ENCODE measurements at regions of chr17 and their contacts with region 1.

Region 1: DNA sequence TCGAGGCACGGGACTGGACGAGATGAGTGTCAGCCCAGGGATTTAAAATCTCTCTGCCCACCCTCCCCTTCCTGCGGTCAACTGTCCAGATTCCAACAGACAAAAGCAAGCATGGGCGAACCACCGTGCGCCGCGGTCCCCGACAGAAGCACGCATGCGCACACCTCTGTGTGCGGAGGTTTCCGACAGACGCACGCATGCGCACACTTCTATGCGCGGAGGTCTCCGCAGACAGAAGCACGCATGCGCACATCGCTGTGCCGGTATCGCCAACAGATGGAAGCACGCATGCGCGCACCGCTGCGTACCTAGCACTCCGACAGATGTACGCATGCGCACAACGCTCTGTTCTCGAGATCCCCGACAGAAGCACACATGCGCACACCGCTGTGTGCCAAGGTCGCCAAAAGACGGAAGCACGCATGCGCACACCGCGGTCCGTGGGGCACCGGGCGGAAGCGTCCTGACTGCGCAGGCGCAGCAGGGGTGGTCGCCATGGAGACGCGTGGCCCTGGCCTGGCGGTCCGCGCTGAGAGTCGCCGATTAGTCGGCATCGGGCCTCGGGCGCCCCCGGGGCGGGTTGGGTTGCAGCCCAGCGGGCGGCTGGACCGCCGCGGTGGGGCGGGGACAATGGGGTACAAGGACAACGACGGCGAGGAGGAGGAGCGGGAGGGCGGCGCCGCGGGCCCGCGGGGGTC is 57.4 kb upstream of the RPH3AL start:
- DNase-seq: peak; percentile 98
- H3K4me3 ChIP-seq: peak overlapping the region; percentile 74 to 94
- H3K27ac ChIP-seq: peak overlapping the region; percentile 55 to 68
- H3K4me1 ChIP-seq: peaks cover 0 to 11% of the 10 kb centered on the region in 2 experiments; a peak in 1 of 4 replicates
- H3K27me3 ChIP-seq: no peaks in the 10 kb centered on the region
- CTCF ChIP-seq: no peak
- EP300 ChIP-seq: no peak
- RAD21 ChIP-seq: no peak

Region 2: GRCh38 chr17:320809-321653 is 89.0 kb before region 1 on chr17:
- CTCF ChIA-PET with region 1: no interaction called
- POLR2A ChIA-PET with region 1: no interaction called
- DNase-seq: no peak
- H3K4me3 ChIP-seq: no peak overlapping the region
- H3K27ac ChIP-seq: no peak overlapping the region
- H3K4me1 ChIP-seq: no peaks in the 10 kb centered on the region; a peak in 1 of 4 replicates
- H3K27me3 ChIP-seq: no peaks in the 10 kb centered on the region
- CTCF ChIP-seq: no peak
- EP300 ChIP-seq: no peak
- RAD21 ChIP-seq: no peak

Region 3: DNA sequence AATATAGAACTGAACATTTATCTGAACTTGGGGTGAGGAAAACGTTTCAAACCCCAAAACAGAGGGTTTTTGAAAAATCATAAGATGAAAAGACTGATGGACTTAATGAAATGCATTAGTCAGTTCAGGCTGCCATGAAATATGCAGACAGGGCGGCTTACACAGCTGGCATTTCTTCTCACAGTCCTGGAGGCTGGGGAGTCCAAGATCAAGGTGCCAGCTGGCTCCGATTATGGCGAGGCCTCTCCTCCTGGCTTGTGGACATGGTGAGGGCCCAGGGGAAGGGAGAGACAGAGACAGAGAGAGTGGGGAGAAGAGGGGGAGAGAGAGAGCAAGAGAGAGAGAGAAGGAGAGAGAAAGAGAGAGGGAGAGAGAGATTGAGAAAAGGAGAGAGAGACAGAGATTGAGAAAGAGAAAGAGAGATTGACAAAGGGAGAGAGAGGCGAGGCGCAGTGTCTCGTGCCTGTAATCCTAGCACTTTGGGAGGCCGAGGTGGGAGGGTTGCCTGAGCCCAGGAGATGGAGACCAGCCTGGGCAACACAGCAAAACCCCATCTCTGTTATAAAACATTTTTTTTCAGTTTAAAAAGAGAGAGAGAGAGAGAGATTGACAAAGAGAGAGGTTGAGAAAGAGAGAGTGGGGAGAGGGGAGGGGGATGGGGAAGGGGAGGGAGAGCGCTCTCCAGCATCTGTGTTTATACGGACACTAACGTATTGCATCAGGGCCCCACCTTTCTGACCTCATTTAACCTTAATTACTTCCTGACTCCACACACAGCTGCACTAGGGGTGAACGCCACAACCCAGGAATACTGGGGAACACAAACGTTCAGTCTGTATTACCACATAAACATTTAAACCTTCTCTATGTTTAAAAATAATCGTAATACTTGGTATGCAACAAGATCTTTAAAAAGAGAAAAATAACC is 32.8 kb before region 1 on chr17:
- CTCF ChIA-PET with region 1: no interaction called
- POLR2A ChIA-PET with region 1: no interaction called
- DNase-seq: no peak
- H3K4me3 ChIP-seq: no peak overlapping the region
- H3K27ac ChIP-seq: no peak overlapping the region
- H3K4me1 ChIP-seq: peaks cover 0 to 3% of the 10 kb centered on the region in 2 experiments; a peak in 1 of 4 replicates
- H3K27me3 ChIP-seq: no peaks in the 10 kb centered on the region
- CTCF ChIP-seq: no peak
- EP300 ChIP-seq: no peak
- RAD21 ChIP-seq: no peak

Region 4: DNA sequence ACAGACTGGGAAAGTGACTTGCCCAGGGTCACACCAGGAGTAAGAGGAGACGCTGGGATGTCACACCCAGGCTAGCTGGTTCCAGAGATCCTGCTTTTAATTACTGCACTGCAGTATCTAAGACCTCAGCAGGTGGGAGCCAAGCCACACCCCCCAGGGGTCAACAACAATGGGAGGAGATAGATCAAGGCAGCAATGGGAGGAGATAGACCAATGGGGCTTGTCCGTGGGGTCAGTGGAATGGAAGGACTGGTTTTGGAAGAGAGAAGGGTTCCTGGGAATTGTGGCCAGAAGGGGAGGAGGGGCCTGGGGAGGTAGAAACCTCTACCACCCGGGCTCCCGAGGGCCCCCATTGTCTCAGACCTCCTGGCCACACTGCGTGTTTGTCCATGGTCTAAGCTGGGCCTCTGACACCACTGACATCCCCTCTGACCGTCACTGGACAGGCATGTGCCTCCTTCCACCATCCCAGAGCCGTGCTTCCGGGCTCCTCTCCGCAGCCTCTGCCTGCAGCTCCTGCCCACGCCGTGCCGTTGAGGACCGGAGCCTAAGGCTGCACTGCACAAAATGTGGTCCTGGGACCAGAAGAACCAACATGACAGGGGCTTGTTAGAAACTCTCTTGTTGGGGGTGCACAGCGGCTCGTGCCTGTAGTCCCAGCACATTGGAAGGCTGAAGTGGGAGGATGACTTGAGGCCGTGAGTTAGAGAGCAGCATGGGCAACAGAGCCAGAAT is 12.4 kb after region 1 on chr17:
- CTCF ChIA-PET with region 1: interaction called, 25 read pairs
- POLR2A ChIA-PET with region 1: no interaction called
- DNase-seq: no peak
- H3K4me3 ChIP-seq: no peak overlapping the region
- H3K27ac ChIP-seq: no peak overlapping the region
- H3K4me1 ChIP-seq: no peaks in the 10 kb centered on the region
- H3K27me3 ChIP-seq: no peaks in the 10 kb centered on the region
- CTCF ChIP-seq: no peak
- EP300 ChIP-seq: no peak
- RAD21 ChIP-seq: no peak

Region 5: GRCh38 chr17:491086-492021 is 81.4 kb after region 1 on chr17:
- CTCF ChIA-PET with region 1: interaction called, 14 read pairs
- POLR2A ChIA-PET with region 1: no interaction called
- DNase-seq: peak; percentile 94
- H3K4me3 ChIP-seq: peak overlapping the region; percentile 49 to 63
- H3K27ac ChIP-seq: peak overlapping the region; percentile 40 to 81; a peak in 3 of 4 replicates
- H3K4me1 ChIP-seq: peaks cover 0 to 13% of the 10 kb centered on the region in 2 experiments; a peak in 1 of 4 replicates
- H3K27me3 ChIP-seq: no peaks in the 10 kb centered on the region
- CTCF ChIP-seq: no peak
- EP300 ChIP-seq: peak in 1 of 2 experiments; percentile 21; a peak in 1 of 4 replicates
- RAD21 ChIP-seq: no peak

Region 6: GRCh38 chr17:688100-688989 is 278.3 kb after region 1 on chr17:
- CTCF ChIA-PET with region 1: interaction called, 54 read pairs
- POLR2A ChIA-PET with region 1: no interaction called
- DNase-seq: no peak
- H3K4me3 ChIP-seq: no peak overlapping the region
- H3K27ac ChIP-seq: no peak overlapping the region
- H3K4me1 ChIP-seq: peaks cover 0 to 16% of the 10 kb centered on the region in 2 experiments; a peak in 2 of 4 replicates
- H3K27me3 ChIP-seq: no peaks in the 10 kb centered on the region
- CTCF ChIP-seq: peak; percentile 38
- EP300 ChIP-seq: no peak
- RAD21 ChIP-seq: peak; percentile 54

Region 7: DNA sequence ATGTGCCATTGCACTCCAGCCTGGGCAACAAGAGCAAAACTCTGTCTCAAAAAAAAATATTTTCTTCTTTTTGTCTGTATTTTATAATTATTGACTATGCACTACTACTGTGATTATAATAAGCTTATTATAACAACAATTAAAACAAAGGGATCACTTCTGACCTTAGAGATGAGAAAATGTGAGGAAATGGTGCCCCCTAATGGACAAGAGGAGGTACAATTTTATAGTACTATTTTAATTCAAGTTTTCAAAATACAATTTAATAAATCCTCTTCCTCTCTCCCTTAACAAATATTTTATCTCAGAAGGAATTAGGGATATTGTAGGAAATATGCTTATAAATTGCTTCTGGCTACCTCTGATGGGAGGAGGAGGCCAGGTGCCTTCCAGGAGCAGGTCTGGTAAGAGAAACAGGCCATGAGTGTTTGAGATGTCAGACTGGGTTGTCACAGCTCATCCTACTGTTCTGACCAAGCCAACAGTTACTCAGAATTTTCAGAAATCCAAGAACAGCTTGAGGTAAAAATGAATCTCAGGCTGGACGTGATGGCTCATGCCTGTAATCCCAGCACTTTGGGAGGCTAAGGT is 290.6 kb after region 1 on chr17:
- CTCF ChIA-PET with region 1: interaction called, 255 read pairs
- POLR2A ChIA-PET with region 1: interaction called, 8 read pairs
- DNase-seq: peak; percentile 58
- H3K4me3 ChIP-seq: peak overlapping the region in 1 of 2 experiments; percentile 47; a peak in 1 of 4 replicates
- H3K27ac ChIP-seq: no peak overlapping the region
- H3K4me1 ChIP-seq: peaks cover 4 to 32% of the 10 kb centered on the region in 2 experiments; a peak in 1 of 4 replicates
- H3K27me3 ChIP-seq: no peaks in the 10 kb centered on the region
- CTCF ChIP-seq: peak; percentile 85
- EP300 ChIP-seq: no peak
- RAD21 ChIP-seq: peak; percentile 83

Region 8: DNA sequence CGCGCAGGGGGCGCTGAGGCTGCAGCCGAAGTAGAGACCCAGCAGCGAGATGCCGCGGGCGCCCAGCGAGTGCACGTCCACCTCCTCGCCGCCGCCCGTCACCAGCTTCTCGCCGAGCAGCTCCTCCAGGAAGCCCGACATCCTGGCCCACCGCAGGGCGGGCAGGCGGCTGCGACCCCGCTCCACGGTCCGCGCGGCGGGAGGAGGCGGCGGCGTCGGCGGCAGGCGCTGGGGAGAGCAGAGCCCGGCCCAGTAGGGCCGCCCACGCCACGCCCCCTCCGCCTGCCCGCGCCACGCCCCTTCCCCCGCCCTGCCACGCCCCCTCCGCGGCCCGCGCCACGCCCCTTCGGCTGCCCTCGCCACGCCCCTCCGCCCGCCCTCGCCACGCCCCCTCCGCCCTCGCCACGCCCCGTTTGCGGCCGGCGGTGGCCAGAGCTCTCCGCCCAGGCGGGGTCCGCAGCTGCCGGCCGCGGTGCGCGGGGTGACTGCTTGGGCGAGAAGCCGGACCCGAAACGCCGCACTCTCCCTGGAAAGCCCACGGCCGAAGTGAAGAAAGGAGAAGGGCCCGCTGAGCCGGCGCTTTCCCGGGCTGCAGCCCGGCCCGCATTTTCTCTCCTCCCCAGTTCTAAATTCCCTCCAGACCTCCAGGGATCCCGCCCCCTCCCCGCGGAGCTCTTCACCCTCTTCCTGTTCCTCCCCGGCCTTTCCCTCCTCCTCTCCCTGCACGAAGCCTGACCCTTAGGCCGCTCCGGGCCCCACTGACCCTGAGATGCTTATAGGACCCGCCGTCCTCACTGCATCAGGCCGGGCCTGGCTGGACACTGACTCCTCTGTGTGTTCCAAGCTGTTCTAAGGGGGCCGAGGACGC is 569.8 kb after region 1 on chr17 and contains the start of gene NXN:
- CTCF ChIA-PET with region 1: interaction called, 18 read pairs
- POLR2A ChIA-PET with region 1: no interaction called
- DNase-seq: peak; percentile 99
- H3K4me3 ChIP-seq: peak within 1 kb of the TSS; percentile 69 to 71
- H3K27ac ChIP-seq: peak within 1 kb of the TSS; percentile 32 to 65; a peak in 3 of 4 replicates
- H3K4me1 ChIP-seq: peaks cover 0 to 16% of the 10 kb centered on the region in 2 experiments; a peak in 2 of 4 replicates
- H3K27me3 ChIP-seq: peaks cover 26% of the 10 kb centered on the region
- CTCF ChIP-seq: peak; percentile 34; the same call in 1 of the 2 replicates
- EP300 ChIP-seq: no peak
- RAD21 ChIP-seq: peak; percentile 17; the same call in 1 of the 2 replicates
- polyA plus RNA-seq, gene NXN: 19.5 and 23.9 TPM in 2 replicates